ENCODE measurements at regions of chr12 and their contacts with region 1.

Region 1: DNA sequence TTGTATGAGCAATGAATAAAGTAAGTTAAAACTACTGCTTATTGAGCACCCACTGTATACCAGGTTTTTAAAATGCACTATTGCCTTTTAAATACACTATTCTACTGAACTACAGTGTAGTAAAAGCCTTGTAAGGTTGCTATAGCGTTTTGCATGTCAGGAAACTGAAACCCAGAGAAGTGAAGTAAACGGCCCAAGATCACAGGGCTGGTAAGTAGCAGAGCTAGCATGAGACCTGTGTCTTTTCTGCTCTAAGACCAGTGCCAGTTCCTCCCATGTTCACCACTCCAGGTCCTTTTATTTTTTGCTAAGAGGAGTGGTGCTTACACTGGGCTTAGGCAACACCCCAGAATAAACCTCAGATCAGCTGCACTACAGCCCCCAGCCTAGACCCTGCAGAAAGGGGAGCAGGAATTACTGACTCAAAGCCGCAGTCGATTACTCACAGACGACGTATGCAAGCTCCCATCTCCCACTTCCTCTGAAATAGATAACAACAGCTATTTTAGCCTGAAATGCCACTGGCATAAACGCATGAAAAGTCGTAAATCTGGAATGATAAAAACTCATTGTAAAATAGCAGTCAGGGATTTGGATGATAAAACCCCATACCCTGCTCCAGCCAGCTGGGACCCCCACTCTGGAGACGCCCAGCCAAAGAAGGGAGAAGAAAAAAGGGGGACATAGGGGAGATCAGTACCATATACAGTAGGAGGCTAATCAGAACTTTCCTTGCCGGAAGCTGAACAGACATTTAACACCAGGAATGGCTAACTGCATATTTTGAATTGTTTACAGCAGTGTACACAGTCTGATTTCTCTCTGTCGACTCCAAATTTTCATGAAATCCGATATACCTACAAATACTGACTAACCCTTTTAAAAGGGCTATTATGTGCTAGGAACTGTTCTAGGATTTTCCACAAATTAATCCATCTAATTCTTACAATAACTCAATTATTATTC is 108.3 kb downstream of the NUAK1 start:
- DNase-seq: peak; percentile 96
- H3K4me3 ChIP-seq: peak overlapping the region; percentile 34
- CTCF ChIP-seq: no peak

Region 2: GRCh38 chr12:105934274-105934673 is 96.2 kb before region 1 on chr12:
- CTCF ChIA-PET with region 1: no interaction called
- POLR2A ChIA-PET with region 1: interaction called, 14 read pairs
- DNase-seq: peak; percentile 92
- H3K4me3 ChIP-seq: no peak overlapping the region
- CTCF ChIP-seq: no peak

Region 3: DNA sequence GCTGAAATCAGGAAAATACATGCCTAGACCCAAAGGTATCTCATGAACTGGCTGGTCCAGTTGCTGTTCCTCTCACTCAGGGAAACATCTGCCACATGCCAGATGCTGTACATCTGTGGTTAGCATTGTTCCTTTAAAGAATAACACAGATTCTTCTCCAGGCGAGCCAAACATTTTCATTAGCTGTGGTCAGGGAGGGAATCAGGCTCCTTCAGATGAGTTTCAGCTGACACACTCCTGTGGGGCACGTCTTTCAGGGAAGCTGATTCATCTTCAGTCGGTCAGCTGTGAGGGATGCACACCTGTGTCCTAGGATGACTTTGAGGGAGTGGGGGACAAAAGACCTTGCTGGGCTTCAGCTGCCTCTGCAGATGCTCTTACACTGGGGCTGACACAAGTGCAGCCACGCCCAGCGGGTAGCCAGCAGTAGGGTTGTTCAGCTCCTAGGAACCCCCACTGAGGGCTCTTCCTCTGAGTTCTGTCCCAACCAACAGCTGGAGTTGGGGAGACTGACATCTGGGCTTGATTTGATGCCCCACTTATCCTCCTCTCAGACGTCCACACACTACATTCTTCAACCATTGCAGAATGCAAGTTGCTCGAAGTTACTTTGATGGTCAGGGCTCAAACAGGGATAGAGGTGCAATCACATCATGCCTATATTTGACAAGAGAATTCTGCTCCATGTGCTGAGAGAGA is 46.7 kb before region 1 on chr12:
- CTCF ChIA-PET with region 1: interaction called, 4 read pairs
- POLR2A ChIA-PET with region 1: interaction called, 12 read pairs
- DNase-seq: peak; percentile 65
- H3K4me3 ChIP-seq: no peak overlapping the region
- CTCF ChIP-seq: no peak

Region 4: DNA sequence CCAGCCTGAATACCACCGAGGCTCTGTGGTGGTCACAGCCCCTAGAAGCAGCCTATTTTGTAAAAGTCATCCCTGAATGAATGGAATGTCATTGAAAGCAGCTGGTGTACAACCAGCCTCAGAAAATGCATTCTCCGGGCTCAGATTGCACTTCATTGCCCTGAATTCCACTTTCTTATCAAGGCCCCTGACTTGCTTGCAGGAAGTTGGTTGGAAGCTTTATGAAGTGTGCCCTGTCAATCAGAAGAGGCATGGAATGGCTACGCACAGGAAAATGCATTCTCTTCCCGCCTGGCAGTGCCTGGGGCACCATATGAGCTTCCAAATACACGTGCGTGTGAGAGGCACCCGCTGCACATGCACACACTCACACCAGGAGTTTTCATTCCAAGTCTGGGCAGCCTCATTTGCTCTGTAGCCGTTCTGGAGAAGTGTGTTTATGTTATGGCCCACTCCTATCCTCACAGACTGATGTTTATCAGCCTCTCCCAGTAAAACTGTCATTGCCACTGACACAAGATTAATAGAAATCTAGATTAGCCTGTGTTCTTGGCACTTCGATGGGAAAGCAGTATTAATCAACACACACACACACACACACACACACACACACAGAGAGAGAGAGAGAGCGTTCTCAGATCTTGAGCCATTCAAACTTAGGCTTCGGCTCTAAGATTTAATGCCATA is 44.4 kb after region 1 on chr12:
- CTCF ChIA-PET with region 1: no interaction called
- POLR2A ChIA-PET with region 1: interaction called, 12 read pairs
- DNase-seq: no peak
- H3K4me3 ChIP-seq: no peak overlapping the region
- CTCF ChIP-seq: no peak